MCF 10A (cell line): ENCODE measurements at regions of chr5 and their contacts with region 1.

Region 1: GRCh38 chr5:157917899-157918809 is 59.2 kb upstream of the CLINT1 start:
- DNase-seq: peak; percentile 90
- H3K4me3 Mint-ChIP-seq: no peak overlapping the region
- H3K27ac Mint-ChIP-seq: peak overlapping the region; percentile 38
- H3K4me1 Mint-ChIP-seq: peaks cover 32% of the 10 kb centered on the region
- H3K27me3 Mint-ChIP-seq: no peaks in the 10 kb centered on the region
- CTCF ChIP-seq: peak; percentile 82

Region 2: DNA sequence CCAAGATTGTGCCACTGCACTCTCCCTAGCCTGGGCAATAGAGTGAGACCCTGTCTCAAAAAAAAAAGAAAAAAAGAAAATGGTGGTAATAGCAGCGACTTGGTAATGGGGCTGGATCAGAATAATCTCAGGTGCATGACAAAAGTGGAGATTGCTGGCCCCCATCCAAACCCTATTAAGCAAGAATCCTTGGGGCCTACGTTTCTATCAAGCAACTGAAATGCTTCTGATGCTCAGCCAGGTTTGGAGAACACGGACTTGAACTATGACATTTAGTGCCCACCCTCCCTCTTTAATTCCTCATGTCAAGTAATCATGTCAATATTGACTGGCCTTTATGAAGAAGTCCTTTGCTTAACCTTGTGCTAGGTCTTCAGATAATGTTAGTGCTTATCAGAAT is 240.2 kb before region 1 on chr5:
- CTCF ChIA-PET with region 1: no interaction called
- POLR2A ChIA-PET with region 1: no interaction called
- intact Hi-C with region 1: no loop called
- DNase-seq: peak; percentile 54
- H3K4me3 Mint-ChIP-seq: no peak overlapping the region
- H3K27ac Mint-ChIP-seq: no peak overlapping the region
- H3K4me1 Mint-ChIP-seq: no peaks in the 10 kb centered on the region
- H3K27me3 Mint-ChIP-seq: no peaks in the 10 kb centered on the region
- CTCF ChIP-seq: no peak

Region 3: DNA sequence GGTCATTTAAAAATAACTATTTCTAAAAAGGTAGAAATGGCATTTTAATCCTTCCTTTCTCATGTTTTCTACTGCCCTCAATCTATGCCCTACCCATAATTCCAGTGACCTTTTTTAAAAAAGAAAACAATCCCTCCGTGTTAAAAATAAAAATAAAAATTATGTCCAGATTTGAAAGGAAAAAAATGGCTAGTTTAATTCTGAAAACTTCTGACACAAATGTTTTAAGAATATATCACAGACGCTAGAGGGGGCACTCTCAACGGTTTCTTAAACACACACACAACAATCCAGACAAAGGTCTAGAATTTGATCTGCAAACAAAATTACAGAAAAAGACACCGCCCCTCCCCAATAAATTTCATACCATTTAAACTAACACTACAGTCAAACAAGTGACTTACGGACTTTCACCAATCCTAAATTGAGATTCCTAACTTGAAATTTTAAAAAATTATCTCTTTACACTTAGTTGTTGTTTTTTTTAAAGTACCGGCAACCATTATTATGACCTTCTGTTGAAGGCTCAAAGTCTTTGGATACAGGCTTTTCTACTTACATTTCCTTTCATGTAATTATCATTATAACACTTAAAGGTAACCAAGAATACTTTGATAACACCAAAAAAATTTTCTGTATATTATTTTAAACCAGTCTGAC is 97.4 kb before region 1 on chr5:
- CTCF ChIA-PET with region 1: interaction called, 6 read pairs
- POLR2A ChIA-PET with region 1: no interaction called
- intact Hi-C with region 1: loop called (anchors 1 kb)
- DNase-seq: peak; percentile 68
- H3K4me3 Mint-ChIP-seq: no peak overlapping the region
- H3K27ac Mint-ChIP-seq: peak overlapping the region; percentile 61
- H3K4me1 Mint-ChIP-seq: peaks cover 21% of the 10 kb centered on the region
- H3K27me3 Mint-ChIP-seq: no peaks in the 10 kb centered on the region
- CTCF ChIP-seq: peak; percentile 68

Region 4: GRCh38 chr5:157870837-157871834 is 47.0 kb before region 1 on chr5:
- CTCF ChIA-PET with region 1: interaction called, 5 read pairs
- POLR2A ChIA-PET with region 1: no interaction called
- intact Hi-C with region 1: loop called (anchors 1 kb)
- DNase-seq: peak; percentile 98
- H3K4me3 Mint-ChIP-seq: peak overlapping the region; percentile 65
- H3K27ac Mint-ChIP-seq: peak overlapping the region; percentile 98
- H3K4me1 Mint-ChIP-seq: peaks cover 18% of the 10 kb centered on the region
- H3K27me3 Mint-ChIP-seq: no peaks in the 10 kb centered on the region
- CTCF ChIP-seq: no peak

Region 5: GRCh38 chr5:157971571-157972216 is 53.5 kb after region 1 on chr5:
- CTCF ChIA-PET with region 1: no interaction called
- POLR2A ChIA-PET with region 1: no interaction called
- intact Hi-C with region 1: no loop called
- DNase-seq: no peak
- H3K4me3 Mint-ChIP-seq: no peak overlapping the region
- H3K27ac Mint-ChIP-seq: no peak overlapping the region
- H3K4me1 Mint-ChIP-seq: no peaks in the 10 kb centered on the region
- H3K27me3 Mint-ChIP-seq: peaks cover 9% of the 10 kb centered on the region
- CTCF ChIP-seq: no peak

Region 6: DNA sequence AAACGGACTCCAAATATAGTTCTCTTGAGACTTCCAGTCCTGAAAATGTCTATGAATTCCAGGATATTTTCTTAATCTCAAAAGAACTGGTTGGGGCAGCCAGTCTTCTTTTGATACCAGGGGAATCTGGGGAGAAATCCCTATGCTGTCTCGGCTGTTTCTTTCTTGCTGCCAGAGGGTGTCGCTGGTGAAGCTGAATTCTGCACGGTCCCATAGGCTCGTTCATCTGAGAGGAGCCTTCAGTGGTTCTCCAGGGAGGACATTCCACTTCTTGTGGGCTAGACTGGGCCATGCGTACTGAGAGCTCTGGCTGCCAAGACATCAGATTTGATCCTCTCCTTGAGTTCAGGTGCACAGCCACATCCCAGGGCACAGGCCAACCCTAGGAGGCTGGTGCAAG is 95.8 kb after region 1 on chr5:
- CTCF ChIA-PET with region 1: no interaction called
- POLR2A ChIA-PET with region 1: no interaction called
- intact Hi-C with region 1: no loop called
- DNase-seq: peak; percentile 64
- H3K4me3 Mint-ChIP-seq: no peak overlapping the region
- H3K27ac Mint-ChIP-seq: no peak overlapping the region
- H3K4me1 Mint-ChIP-seq: no peaks in the 10 kb centered on the region
- H3K27me3 Mint-ChIP-seq: no peaks in the 10 kb centered on the region
- CTCF ChIP-seq: peak; percentile 68